WTC11 (cell line): ENCODE measurements at regions of chr1 and their contacts with region 1.

Region 1: DNA sequence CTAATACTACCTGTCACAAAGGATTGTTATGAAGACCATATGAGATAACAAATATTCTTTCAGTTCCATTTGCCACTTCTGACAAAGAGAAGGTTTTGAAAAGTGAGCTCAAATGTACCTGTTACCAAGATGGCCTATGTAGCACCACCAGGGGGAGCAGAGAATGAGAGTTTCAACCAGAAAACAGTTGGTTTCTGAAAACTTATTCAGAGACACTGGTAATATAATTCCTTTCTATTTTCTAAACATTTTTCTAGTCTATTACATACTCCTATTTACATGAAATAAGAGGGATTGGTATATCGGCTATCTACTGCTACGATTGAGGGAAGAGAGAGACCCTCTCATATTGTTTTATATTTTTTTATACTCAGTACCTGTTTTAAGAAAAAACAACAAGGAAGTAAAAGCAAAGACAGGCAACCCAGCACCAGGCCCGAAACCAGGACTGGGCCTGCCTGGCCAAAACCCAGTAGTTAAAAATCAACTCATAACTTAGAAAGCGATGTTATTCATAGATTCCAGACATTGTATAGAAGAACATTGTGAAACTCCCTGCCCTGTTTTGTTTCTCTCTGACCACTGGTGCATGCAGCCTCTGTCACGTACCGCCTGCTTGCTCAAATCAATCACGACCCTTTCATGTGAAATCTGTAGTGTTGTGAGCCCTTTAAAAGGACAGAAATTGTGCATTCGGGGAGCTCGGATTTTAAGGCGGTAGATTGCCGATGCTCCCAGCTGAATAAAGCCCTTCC is 48.3 kb downstream of the IL23R start:
- DNase-seq: peak; percentile 29
- ATAC-seq: no peak; the same call in 1 of the 2 replicates
- H3K4me3 Mint-ChIP-seq: no peak overlapping the region
- H3K27ac Mint-ChIP-seq: no peak overlapping the region
- H3K4me1 Mint-ChIP-seq: peaks cover 9% of the 10 kb centered on the region
- H3K27me3 Mint-ChIP-seq: no peaks in the 10 kb centered on the region
- CTCF ChIP-seq: no peak; the same call in 1 of the 2 replicates

Region 2: DNA sequence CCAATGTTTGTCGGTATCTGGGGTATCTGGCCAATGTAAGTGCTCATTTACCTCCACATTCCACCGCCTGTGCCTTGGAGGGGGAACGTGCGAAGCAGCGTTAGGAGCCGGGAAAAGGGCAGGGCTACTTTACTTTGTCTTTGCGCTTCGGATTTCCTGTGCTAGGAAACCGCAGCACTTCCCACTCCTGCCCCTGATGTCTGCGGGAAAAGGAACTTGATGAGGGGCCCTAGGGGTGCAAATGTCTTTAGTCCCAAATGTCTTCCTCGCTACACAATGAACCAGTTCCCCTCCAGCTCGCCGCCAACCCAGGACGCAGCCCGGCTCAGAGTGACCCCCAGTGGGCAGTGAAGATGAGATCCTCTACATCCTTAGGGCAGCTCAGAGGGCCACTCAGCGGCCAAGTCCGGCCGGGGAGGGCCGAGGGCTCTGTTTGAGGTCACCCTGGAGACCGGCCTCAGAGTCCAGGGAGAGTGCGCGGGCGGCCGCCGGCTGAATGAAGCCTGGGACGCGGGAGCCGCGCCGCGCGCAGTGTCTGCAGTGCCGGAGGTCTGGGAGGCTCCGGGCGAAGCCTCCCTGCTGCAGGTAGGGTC is 462.5 kb before region 1 on chr1 and contains the start of gene DYNLT5:
- CTCF ChIA-PET with region 1: no interaction called
- POLR2A ChIA-PET with region 1: no interaction called
- DNase-seq: peak; percentile 74
- ATAC-seq: peak; percentile 89
- H3K4me3 Mint-ChIP-seq: peak within 1 kb of the TSS; percentile 79
- H3K27ac Mint-ChIP-seq: no peak within 1 kb of the TSS
- H3K4me1 Mint-ChIP-seq: peaks cover 13% of the 10 kb centered on the region
- H3K27me3 Mint-ChIP-seq: peaks cover 33% of the 10 kb centered on the region
- CTCF ChIP-seq: no peak
- total RNA-seq, gene DYNLT5: 1.3 to 1.8 TPM (median 1.6 TPM) in 3 replicates

Region 3: GRCh38 chr1:66996018-66996682 is 218.4 kb before region 1 on chr1:
- CTCF ChIA-PET with region 1: interaction called, 70 read pairs
- POLR2A ChIA-PET with region 1: no interaction called
- DNase-seq: peak; percentile 63
- ATAC-seq: peak; percentile 77
- H3K4me3 Mint-ChIP-seq: no peak overlapping the region
- H3K27ac Mint-ChIP-seq: no peak overlapping the region
- H3K4me1 Mint-ChIP-seq: no peaks in the 10 kb centered on the region
- H3K27me3 Mint-ChIP-seq: no peaks in the 10 kb centered on the region
- CTCF ChIP-seq: 0 out of 2 replicates have a peak, but pooled peaks have one; percentile 42

Region 4: GRCh38 chr1:67118191-67118590 is 96.4 kb before region 1 on chr1:
- CTCF ChIA-PET with region 1: no interaction called
- POLR2A ChIA-PET with region 1: no interaction called
- DNase-seq: no peak
- ATAC-seq: no peak
- H3K4me3 Mint-ChIP-seq: no peak overlapping the region
- H3K27ac Mint-ChIP-seq: no peak overlapping the region
- H3K4me1 Mint-ChIP-seq: no peaks in the 10 kb centered on the region
- H3K27me3 Mint-ChIP-seq: 0 out of 2 replicates have a peak, but pooled peaks cover 3% of the 10 kb centered on the region
- CTCF ChIP-seq: no peak

Region 5: GRCh38 chr1:67194209-67194863 is 20.3 kb before region 1 on chr1:
- CTCF ChIA-PET with region 1: interaction called, 10 read pairs
- POLR2A ChIA-PET with region 1: no interaction called
- DNase-seq: no peak
- ATAC-seq: no peak
- H3K4me3 Mint-ChIP-seq: no peak overlapping the region
- H3K27ac Mint-ChIP-seq: no peak overlapping the region
- H3K4me1 Mint-ChIP-seq: no peaks in the 10 kb centered on the region
- H3K27me3 Mint-ChIP-seq: no peaks in the 10 kb centered on the region
- CTCF ChIP-seq: no peak

Region 6: GRCh38 chr1:67261680-67262079 is 47.1 kb after region 1 on chr1:
- CTCF ChIA-PET with region 1: interaction called, 35 read pairs
- POLR2A ChIA-PET with region 1: no interaction called
- DNase-seq: peak; percentile 21
- ATAC-seq: peak; percentile 87
- H3K4me3 Mint-ChIP-seq: peak overlapping the region; percentile 12; the same call in 1 of the 2 replicates
- H3K27ac Mint-ChIP-seq: peak overlapping the region; percentile 79; the same call in 1 of the 2 replicates
- H3K4me1 Mint-ChIP-seq: peaks cover 54% of the 10 kb centered on the region
- H3K27me3 Mint-ChIP-seq: no peaks in the 10 kb centered on the region
- CTCF ChIP-seq: no peak

Region 7: GRCh38 chr1:67339623-67340343 is 125.2 kb after region 1 on chr1:
- CTCF ChIA-PET with region 1: interaction called, 62 read pairs
- POLR2A ChIA-PET with region 1: no interaction called
- DNase-seq: no peak
- ATAC-seq: no peak
- H3K4me3 Mint-ChIP-seq: no peak overlapping the region
- H3K27ac Mint-ChIP-seq: no peak overlapping the region
- H3K4me1 Mint-ChIP-seq: peaks cover 53% of the 10 kb centered on the region
- H3K27me3 Mint-ChIP-seq: peaks cover 31% of the 10 kb centered on the region
- CTCF ChIP-seq: no peak

Region 8: DNA sequence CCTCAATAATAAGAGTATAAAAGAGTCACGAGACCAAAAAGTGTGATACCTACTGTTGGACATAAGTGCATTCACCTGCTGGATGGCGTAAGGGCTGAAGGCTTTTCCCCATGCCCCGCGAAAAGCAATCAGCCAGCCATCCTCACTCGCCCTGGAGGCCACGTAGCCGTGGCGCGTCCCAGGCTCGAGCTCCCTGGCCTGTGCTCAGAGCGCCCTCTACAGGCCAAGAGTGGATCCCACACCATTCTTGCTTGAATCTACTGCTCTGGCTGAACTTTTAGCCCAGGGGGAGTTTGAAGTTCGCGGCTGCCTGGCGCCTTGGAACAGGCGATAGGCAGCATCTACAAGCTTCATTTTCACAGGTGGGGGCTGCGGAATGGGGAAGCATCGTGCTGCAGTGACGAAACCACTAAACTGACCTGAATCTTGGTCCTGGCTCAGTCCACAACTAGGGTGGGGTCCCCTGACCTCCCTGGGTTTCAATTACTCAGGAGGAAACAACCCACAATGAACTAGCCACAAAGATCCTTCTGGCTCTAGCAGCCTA is 285.9 kb after region 1 on chr1:
- CTCF ChIA-PET with region 1: interaction called, 76 read pairs
- POLR2A ChIA-PET with region 1: no interaction called
- DNase-seq: peak; percentile 95
- ATAC-seq: peak; percentile 99
- H3K4me3 Mint-ChIP-seq: no peak overlapping the region
- H3K27ac Mint-ChIP-seq: no peak overlapping the region
- H3K4me1 Mint-ChIP-seq: no peaks in the 10 kb centered on the region
- H3K27me3 Mint-ChIP-seq: peaks cover 57% of the 10 kb centered on the region
- CTCF ChIP-seq: peak; percentile 95